Posterior vena cava (tissue), 2 donors: ENCODE measurements at regions of chr7 and their contacts with region 1.

Region 1: GRCh38 chr7:99143853-99144672 is at the start of gene SMURF1:
- DNase-seq: peak; percentile 89
- total RNA-seq, gene SMURF1: 25.0 to 27.2 TPM

Region 2: GRCh38 chr7:99029466-99030435 is 114.3 kb before region 1 on chr7:
- intact Hi-C with region 1: loop called in 1 of 2 experiments (anchors 5 kb)
- DNase-seq: no peak

Region 3: DNA sequence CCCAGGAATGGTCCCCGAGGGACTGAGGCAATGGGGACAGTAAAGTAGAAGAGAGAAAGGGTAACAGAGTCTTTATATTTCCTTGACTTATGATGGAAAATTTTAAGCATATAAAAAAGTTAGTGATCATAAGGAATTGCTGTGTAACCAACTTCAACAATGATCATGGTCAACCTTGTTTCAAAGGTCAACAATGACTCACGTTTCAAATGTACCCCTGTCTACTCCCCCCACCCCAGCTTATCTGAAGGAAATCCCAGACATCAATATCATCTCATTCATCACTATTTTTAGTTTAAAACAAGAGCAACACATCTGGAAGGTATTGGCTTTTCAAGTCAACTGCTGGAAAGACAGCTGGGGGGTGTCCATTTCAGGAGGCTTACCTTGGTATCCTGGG is 93.1 kb before region 1 on chr7:
- intact Hi-C with region 1: loop called in 1 of 2 experiments (anchors 5 kb)
- DNase-seq: no peak

Region 4: GRCh38 chr7:99312316-99313203 is 168.5 kb after region 1 on chr7:
- intact Hi-C with region 1: loop called in 1 of 2 experiments (anchors 10 kb)
- DNase-seq: peak; percentile 82

Region 5: DNA sequence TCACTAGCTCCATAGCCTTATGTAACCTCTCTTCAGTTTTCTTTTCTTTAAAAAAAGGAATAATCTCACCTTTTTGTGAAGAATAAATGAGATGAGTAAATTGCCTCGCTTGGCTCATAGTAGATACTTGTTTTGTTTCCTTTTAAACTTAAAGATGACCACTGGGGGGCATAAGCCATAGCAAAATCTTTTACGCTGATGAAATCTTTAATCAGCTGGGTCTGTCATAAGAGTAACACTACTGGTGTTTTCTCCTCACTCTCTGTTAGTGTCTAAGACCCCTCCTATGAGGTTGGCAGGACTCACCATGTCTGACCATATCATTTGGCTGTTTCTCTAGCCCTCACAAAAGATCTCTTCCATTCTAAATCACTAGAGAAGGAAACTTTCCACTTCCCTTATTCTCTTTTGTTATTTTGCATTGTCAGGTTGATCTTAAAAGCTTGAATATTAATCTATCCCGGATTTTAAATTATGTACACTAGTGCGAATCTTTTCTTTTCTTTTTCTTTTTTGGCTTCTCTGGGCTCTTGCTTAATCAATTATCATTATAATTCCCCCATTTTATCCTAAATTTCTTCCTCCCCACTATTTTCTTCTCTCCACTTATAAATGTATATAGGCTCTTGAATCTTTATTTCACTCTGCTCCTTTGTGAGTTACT is 1046.1 kb after region 1 on chr7:
- intact Hi-C with region 1: loop called in 1 of 2 experiments (anchors 10 kb)
- DNase-seq: no peak